Posterior cingulate gyrus (tissue), 11 donors: ENCODE measurements at regions of chr2 and their contacts with region 1.

Region 1: GRCh38 chr2:231104115-231104713 is 20.6 kb downstream of the HTR2B start:
- DNase-seq: peak in 8 of 10 donors; percentile 16 to 92 (median 67)

Region 2: GRCh38 chr2:230974096-230974913 is 129.9 kb before region 1 on chr2:
- intact Hi-C with region 1: no loop called
- DNase-seq: no peak

Region 3: GRCh38 chr2:231198291-231199173 is 94.3 kb after region 1 on chr2 and contains the start of gene ARMC9:
- intact Hi-C with region 1: loop called (anchors 10 kb)
- DNase-seq: peak; percentile 64 to 97 (median 80)

Region 4: GRCh38 chr2:231227309-231228162 is 123.3 kb after region 1 on chr2:
- intact Hi-C with region 1: loop called (anchors 10 kb)
- DNase-seq: peak in 6 of 10 donors; percentile 41 to 87 (median 60)

Region 5: GRCh38 chr2:231308631-231309428 is 204.6 kb after region 1 on chr2:
- intact Hi-C with region 1: loop called (anchors 10 kb)
- DNase-seq: no peak

Region 6: GRCh38 chr2:231411831-231412617 is 307.8 kb after region 1 on chr2:
- intact Hi-C with region 1: loop called (anchors 2 kb)
- DNase-seq: peak; percentile 66 to 99 (median 89)

Region 7: GRCh38 chr2:231452799-231453508 is 348.7 kb after region 1 on chr2:
- intact Hi-C with region 1: loop called (anchors 1 kb)
- DNase-seq: peak in 1 of 10 donors; percentile 47